Ascending aorta (tissue), 2 donors: ENCODE measurements at regions of chr2 and their contacts with region 1.

Region 1: GRCh38 chr2:222860740-222861410 is at the start of gene ACSL3:
- DNase-seq: peak; percentile 90 to 98
- H3K4me3 ChIP-seq: peak within 1 kb of the TSS; percentile 83 to 99
- H3K27ac ChIP-seq: peak within 1 kb of the TSS; percentile 94 to 96
- H3K4me1 ChIP-seq: peaks cover 0 to 29% of the 10 kb centered on the region in 2 donors
- H3K27me3 ChIP-seq: no peaks in the 10 kb centered on the region
- CTCF ChIP-seq: peak in 2 of 3 experiments; percentile 19 to 54
- total RNA-seq, gene ACSL3: 48.9 TPM

Region 2: DNA sequence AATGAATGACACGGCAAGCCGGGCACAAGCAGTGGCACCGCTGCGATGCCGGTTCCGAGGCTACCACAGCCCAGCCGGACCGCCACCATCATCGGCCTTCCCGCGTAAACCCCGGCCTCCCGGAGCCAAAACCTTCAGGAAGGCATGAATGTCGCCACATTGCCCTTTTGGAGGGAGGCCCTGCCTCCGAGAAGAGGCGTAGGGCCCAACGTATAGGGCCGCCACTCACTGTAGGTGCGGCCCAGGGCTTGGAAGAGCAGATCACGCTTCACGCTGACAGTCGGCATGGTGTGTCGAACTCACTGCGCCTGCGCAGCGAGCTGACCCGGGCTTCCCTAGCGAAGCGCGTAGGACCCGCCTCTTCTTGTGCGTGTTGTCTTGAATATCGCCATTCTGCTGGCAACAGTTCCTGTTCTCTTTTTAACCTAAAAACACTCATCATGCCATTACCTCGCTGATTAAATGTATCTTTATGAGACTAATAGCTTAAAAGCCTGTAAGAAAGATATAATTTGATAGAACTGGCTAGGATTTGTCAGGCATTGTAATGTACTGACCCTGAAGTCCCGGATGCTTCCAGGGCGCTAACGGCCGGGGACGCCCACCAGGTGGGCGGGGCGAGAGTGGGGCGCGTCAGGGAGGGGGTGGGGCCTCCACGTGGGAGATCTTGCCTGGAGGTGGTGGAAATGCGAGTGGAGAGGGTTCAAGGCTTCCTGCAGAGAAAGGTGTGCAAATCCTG is 204.9 kb before region 1 on chr2 and contains the start of gene FARSB:
- intact Hi-C with region 1: loop called (anchors 1 kb)
- DNase-seq: peak; percentile 65 to 96
- H3K4me3 ChIP-seq: peak within 1 kb of the TSS; percentile 68 to 88
- H3K27ac ChIP-seq: peak within 1 kb of the TSS; percentile 82 to 85
- H3K4me1 ChIP-seq: peaks cover 3 to 12% of the 10 kb centered on the region in 2 donors
- H3K27me3 ChIP-seq: no peaks in the 10 kb centered on the region
- CTCF ChIP-seq: no peak
- total RNA-seq, gene FARSB: 4.4 TPM

Region 3: GRCh38 chr2:222707689-222708525 is 153.0 kb before region 1 on chr2:
- intact Hi-C with region 1: loop called (anchors 1 kb)
- DNase-seq: peak; percentile 24 to 92
- H3K4me3 ChIP-seq: peak overlapping the region in 1 of 2 donors; percentile 30
- H3K27ac ChIP-seq: peak overlapping the region; percentile 45 to 78
- H3K4me1 ChIP-seq: peaks cover 0 to 30% of the 10 kb centered on the region in 2 donors
- H3K27me3 ChIP-seq: no peaks in the 10 kb centered on the region
- CTCF ChIP-seq: peak; percentile 93 to 98 (median 98)

Region 4: GRCh38 chr2:222722327-222722946 is 138.4 kb before region 1 on chr2:
- intact Hi-C with region 1: no loop called
- DNase-seq: no peak
- H3K4me3 ChIP-seq: no peak overlapping the region
- H3K27ac ChIP-seq: peak overlapping the region; percentile 31 to 67
- H3K4me1 ChIP-seq: peaks cover 0 to 7% of the 10 kb centered on the region in 2 donors
- H3K27me3 ChIP-seq: no peaks in the 10 kb centered on the region
- CTCF ChIP-seq: no peak

Region 5: DNA sequence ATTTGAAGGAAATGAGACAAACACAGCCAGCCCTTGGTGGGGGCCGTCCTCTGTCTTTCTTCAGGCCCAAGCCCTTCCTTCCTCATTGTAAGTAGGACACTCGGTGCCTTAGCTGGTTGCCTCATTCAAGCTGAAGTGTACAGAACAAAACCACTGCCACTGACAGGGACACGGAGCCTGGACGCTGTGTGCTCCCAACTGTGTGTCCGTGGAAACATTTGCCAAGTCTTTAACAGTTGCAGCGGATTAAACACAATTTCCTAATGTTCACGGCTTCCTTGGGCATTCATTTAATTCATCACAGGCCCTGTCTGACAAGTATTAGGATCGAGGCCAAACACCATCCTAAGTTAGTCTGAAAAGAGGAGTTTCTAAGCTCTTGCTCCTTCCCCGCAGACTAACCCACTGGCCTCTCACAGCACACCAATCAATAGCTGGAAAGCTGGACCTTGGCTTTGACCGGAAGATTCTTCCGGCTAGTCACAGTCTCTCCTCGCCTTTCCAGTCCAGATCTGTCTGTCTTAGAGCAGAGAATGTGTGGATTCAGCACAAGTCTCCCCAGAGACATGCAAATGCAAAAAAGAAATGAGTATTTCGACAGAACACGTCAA is 68.8 kb before region 1 on chr2:
- intact Hi-C with region 1: loop called (anchors 5 kb)
- DNase-seq: peak; percentile 42 to 84
- H3K4me3 ChIP-seq: no peak overlapping the region
- H3K27ac ChIP-seq: peak overlapping the region; percentile 72 to 85
- H3K4me1 ChIP-seq: peaks cover 0 to 23% of the 10 kb centered on the region in 2 donors
- H3K27me3 ChIP-seq: no peaks in the 10 kb centered on the region
- CTCF ChIP-seq: no peak

Region 6: GRCh38 chr2:222903234-222904220 is 42.7 kb after region 1 on chr2:
- intact Hi-C with region 1: loop called (anchors 2 kb)
- DNase-seq: no peak
- H3K4me3 ChIP-seq: no peak overlapping the region
- H3K27ac ChIP-seq: peak overlapping the region in 1 of 2 donors; percentile 61
- H3K4me1 ChIP-seq: peaks cover 3 to 29% of the 10 kb centered on the region in 2 donors
- H3K27me3 ChIP-seq: no peaks in the 10 kb centered on the region
- CTCF ChIP-seq: peak; percentile 42 to 57 (median 44)